ENCODE measurements at regions of chr22 and their contacts with region 1.

Region 1: DNA sequence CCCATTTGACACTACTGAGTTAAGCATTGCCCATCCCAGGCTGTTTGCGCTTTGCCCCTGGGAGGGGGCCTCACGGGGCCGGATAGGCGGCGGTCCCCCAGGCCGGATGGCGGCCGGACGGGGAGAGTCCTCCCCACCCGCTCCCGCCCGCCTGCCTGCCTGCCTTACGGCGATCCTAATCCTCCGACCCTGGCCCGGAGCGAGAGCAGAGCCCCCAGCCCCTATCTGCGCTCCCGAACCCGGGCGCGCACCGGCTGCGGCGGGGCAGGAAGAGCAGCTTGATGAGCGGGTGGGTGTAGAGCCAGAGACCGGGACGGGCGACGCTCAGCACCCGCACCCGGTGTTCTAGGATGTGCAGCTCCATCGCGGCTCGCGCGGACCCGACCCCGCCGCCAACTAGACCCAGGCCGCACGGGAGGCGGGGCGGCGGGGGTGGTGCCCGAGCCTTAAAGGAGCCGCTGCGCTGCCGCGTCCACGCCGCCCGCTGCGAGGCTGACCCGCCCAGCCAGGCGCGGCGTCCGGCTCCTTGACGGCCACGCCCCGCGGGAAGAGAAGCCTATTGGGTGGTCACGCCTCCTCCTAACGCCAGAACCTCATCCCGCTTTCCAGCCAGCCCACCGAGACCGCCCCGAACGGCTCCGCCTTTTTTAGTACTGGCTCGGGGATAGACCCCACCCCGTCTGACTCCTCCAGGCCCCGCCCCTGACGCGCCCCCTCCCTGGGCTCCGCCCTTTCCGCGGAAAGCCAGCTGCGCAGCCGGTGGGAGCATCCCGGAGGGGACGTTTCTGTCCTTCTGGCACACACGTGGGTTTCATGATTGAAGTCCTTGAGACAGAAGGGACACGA is at the start of gene CASTOR1:
- DNase-seq: peak; percentile 93
- ATAC-seq: peak; percentile 88
- H3K4me3 Mint-ChIP-seq: peak within 1 kb of the TSS; percentile 72
- H3K27ac Mint-ChIP-seq: peak within 1 kb of the TSS; percentile 72
- H3K4me1 Mint-ChIP-seq: peaks cover 23% of the 10 kb centered on the region
- H3K27me3 Mint-ChIP-seq: no peaks in the 10 kb centered on the region
- total RNA-seq, gene CASTOR1: 1.6 to 2.2 TPM

Region 2: DNA sequence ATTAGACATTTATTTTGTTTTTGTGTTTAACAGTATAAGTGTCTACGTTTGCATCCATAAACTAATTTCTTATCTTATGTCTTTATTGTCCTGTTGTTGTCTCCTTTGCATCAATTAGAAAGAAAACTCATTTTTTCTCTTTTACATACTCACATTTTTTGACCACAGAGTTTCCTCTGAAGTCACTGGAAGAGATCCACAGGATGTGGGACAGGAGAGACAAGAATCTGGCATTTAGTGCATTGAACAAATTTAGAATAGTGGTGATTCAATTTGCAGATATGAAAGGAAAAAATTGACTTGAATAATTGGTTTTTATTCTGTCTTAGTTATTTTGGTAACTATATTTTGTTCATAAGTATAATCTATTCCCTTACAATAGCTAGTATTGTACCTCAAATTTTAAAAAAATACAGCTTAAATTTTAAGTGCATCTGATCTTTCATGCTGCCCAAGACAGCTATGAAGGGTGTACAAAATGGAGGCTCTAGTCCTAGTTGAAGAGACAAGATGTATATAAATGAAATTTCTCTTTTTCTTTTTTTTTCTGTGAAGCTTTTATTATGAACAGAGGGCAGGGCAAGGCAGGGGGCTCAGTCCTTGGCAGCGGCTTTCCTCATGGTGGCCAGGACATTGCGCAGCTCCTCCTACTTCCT is 184.7 kb before region 1 on chr22:
- CTCF ChIA-PET with region 1: interaction called, 60 read pairs
- POLR2A ChIA-PET with region 1: no interaction called
- intact Hi-C with region 1: loop called (anchors 1 kb)
- DNase-seq: no peak
- ATAC-seq: peak; percentile 81
- H3K4me3 Mint-ChIP-seq: no peak overlapping the region
- H3K27ac Mint-ChIP-seq: peak overlapping the region; percentile 44
- H3K4me1 Mint-ChIP-seq: peaks cover 43% of the 10 kb centered on the region
- H3K27me3 Mint-ChIP-seq: no peaks in the 10 kb centered on the region

Region 3: GRCh38 chr22:30277547-30278344 is 11.6 kb before region 1 on chr22:
- CTCF ChIA-PET with region 1: interaction called, 20 read pairs
- POLR2A ChIA-PET with region 1: no interaction called
- intact Hi-C with region 1: no loop called
- DNase-seq: no peak
- ATAC-seq: no peak
- H3K4me3 Mint-ChIP-seq: no peak overlapping the region
- H3K27ac Mint-ChIP-seq: no peak overlapping the region
- H3K4me1 Mint-ChIP-seq: peaks cover 45% of the 10 kb centered on the region
- H3K27me3 Mint-ChIP-seq: no peaks in the 10 kb centered on the region

Region 4: GRCh38 chr22:30326706-30327362 is 37.5 kb after region 1 on chr22 and contains the start of gene TBC1D10A:
- CTCF ChIA-PET with region 1: interaction called, 45 read pairs
- POLR2A ChIA-PET with region 1: interaction called, 5 read pairs
- intact Hi-C with region 1: loop called (anchors 1 to 2 kb)
- DNase-seq: peak; percentile 97
- ATAC-seq: peak; percentile 87
- H3K4me3 Mint-ChIP-seq: peak within 1 kb of the TSS; percentile 82
- H3K27ac Mint-ChIP-seq: peak within 1 kb of the TSS; percentile 89
- H3K4me1 Mint-ChIP-seq: peaks cover 45% of the 10 kb centered on the region
- H3K27me3 Mint-ChIP-seq: no peaks in the 10 kb centered on the region
- total RNA-seq, gene TBC1D10A: 20.1 to 21.6 TPM

Region 5: GRCh38 chr22:30356449-30357235 is 67.3 kb after region 1 on chr22 and contains the starts of genes CCDC157 and SF3A1:
- CTCF ChIA-PET with region 1: interaction called, 25 read pairs
- POLR2A ChIA-PET with region 1: interaction called, 4 read pairs
- intact Hi-C with region 1: loop called (anchors 1 kb)
- DNase-seq: peak; percentile 94
- ATAC-seq: peak; percentile 93
- H3K4me3 Mint-ChIP-seq: peak within 1 kb of the TSS; percentile 92
- H3K27ac Mint-ChIP-seq: peak within 1 kb of the TSS; percentile 90
- H3K4me1 Mint-ChIP-seq: peaks cover 48% of the 10 kb centered on the region
- H3K27me3 Mint-ChIP-seq: no peaks in the 10 kb centered on the region
- total RNA-seq, gene CCDC157: 2.4 to 3.7 TPM
- total RNA-seq, gene SF3A1: 254 to 499 TPM

Region 6: GRCh38 chr22:30413745-30414524 is 124.6 kb after region 1 on chr22:
- CTCF ChIA-PET with region 1: interaction called, 11 read pairs
- POLR2A ChIA-PET with region 1: no interaction called
- intact Hi-C with region 1: no loop called
- DNase-seq: peak; percentile 48
- ATAC-seq: peak; percentile 61
- H3K4me3 Mint-ChIP-seq: no peak overlapping the region
- H3K27ac Mint-ChIP-seq: peak overlapping the region; percentile 79
- H3K4me1 Mint-ChIP-seq: peaks cover 47% of the 10 kb centered on the region
- H3K27me3 Mint-ChIP-seq: no peaks in the 10 kb centered on the region

Region 7: GRCh38 chr22:30591588-30592359 is 302.4 kb after region 1 on chr22 and contains the start of gene PES1:
- CTCF ChIA-PET with region 1: no interaction called
- POLR2A ChIA-PET with region 1: no interaction called
- intact Hi-C with region 1: loop called in 1 of 2 experiments (anchors 1 kb)
- DNase-seq: peak; percentile 96
- ATAC-seq: peak; percentile 100
- H3K4me3 Mint-ChIP-seq: no peak within 1 kb of the TSS
- H3K27ac Mint-ChIP-seq: no peak within 1 kb of the TSS
- H3K4me1 Mint-ChIP-seq: no peaks in the 10 kb centered on the region
- H3K27me3 Mint-ChIP-seq: peaks cover 4% of the 10 kb centered on the region
- total RNA-seq, gene PES1: 134 to 137 TPM

Measured in activated CD4-positive, alpha-beta T cell treated with anti-CD3 and anti-CD28 coated beads for 36 hours (primary cell).